ENCODE measurements at regions of chr22 and their contacts with region 1.

Region 1: DNA sequence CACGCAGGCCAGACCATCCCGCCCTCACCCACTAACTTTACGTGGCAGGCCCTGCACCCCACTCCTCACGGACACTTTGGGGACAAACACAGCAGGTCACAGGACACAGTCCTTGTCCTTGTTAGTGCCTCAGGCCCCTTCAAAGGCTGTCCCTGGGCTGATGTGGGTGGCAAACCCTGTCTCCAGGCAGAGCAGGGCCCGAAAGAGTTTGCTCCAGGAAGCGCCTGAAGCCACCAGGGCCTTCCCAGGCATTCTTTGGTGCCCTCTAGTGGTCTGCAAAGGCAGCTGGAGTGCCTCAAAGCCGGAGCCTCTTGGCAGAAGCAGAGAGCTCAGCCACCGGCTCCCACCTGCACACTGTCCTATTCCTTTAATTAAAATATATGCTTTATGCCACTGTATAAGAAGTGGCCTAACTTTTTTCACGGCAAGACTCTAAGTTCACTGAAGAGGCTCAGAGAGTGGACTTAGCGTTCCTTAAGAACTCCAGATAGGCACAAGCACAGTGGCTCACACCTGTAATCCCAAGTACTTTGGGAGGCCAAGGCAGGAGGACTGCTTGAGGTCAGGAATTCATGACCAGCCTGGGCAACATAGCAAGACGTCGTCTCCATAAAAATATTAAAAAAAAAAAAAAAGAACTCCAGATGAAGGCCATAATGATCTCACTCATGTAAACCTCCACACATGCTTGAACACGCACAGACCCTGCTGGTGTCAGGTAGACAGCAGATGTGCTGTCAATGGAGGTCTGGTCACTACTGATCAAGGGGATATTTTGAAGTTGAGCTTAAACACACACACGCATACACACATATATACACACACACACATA is 11.1 kb downstream of the TXN2 start:
- DNase-seq: peak; percentile 92

Region 2: DNA sequence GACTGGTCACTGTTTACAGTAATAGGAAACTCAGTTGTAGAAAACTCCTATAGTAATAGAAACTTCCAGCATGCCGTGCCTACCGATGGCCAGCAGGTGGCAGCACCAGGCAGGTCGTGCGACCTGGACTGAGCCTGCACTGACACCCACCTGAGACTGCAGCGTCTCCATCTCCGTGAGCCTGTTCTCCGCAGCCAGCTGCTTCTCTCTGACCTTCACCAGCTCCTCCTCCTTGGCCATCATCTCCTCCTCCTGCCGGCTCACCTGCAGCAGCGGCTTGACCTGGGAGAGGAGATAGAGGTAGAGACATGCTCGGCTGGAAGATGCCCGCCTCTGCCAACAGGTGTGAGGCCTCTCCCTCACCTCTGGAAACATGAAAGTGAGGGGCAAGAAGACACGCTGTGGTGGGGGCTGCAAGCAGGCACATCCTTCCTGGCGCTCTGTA is 169.0 kb before region 1 on chr22:
- intact Hi-C with region 1: loop called (anchors 2 kb)
- DNase-seq: peak; percentile 88

Region 3: GRCh38 chr22:36323182-36323854 is 147.1 kb before region 1 on chr22:
- intact Hi-C with region 1: loop called (anchors 5 kb)
- DNase-seq: peak; percentile 88

Region 4: DNA sequence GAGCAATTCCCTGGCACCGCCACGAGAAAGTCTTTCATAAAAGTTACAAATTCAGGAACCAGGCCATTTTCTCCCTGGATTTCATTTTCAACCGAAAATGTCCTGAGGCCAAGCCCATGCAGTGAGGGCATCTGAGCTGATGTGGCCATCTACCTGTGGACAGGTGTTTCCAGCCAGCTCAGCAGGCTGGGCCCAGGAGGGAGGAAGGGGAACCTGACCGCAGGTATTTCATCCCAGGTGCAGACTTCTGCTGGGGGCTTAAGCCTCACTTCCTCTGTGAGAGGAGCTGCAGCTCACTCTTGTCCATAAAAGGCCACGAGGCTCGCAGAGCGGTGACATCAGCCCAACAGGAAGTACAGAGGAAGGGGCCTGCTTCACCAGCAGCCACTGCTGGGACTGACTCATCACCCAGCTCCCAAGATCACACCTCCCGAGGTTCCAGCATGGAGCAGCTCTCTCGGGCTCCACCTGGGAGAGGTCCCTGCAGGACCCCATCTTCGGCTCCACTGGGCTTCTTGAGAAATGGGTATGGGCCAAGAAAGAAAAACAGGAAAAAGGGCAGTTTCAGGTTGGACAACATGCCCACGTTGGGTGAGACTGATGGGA is 139.0 kb before region 1 on chr22:
- intact Hi-C with region 1: loop called (anchors 1 kb)
- DNase-seq: peak; percentile 97